Ascending aorta (tissue), 2 donors: ENCODE measurements at regions of chr11 and their contacts with region 1.

Region 1: DNA sequence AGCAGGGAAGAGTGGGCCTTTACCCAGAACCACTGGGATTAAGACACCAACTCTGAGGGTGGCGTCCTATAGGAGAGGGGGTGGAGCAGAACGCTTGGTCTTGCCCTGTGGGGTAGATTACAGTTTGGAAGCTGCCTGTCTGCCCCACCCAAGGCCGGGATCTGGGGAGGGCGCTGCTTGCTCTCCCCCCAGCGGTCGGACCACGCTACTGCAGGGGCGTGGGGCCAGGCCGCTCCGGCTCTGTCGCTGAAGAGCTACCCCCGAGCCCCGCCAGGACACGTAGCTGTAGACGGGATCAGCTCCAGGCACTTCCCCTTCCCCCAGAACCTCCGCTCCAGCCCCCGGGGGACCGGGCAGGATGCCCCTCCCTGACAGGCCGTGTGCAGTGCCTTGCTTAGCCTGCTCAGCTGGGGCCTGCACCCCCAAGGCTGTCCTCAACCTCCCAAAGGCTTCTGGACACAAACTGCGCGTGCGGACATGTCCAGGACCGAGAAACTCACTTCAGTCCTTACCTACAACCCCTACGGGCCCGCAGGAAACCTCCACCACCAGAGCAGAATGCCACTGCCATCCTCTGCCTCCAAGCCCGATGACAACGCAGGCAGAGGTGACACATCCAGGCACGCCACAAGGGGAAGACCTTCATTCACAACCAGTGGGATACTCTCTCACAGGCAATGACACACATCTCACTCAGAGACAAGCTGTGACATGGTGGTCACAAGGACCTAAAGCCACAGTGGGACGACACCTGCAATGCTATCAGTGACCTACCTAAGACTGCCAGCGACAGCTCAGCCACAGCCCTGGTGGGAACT is 3.6 kb downstream of the AHNAK start:
- DNase-seq: peak; percentile 47 to 88
- H3K4me3 ChIP-seq: peak overlapping the region; percentile 98
- H3K27ac ChIP-seq: peak overlapping the region; percentile 96 to 99
- H3K4me1 ChIP-seq: peaks cover 36 to 52% of the 10 kb centered on the region in 2 donors
- H3K27me3 ChIP-seq: no peaks in the 10 kb centered on the region
- CTCF ChIP-seq: peak; percentile 98 to 99 (median 99)

Region 2: GRCh38 chr11:62400760-62401159 is 142.2 kb before region 1 on chr11:
- intact Hi-C with region 1: loop called (anchors 1 kb)
- DNase-seq: peak; percentile 49 to 92
- H3K4me3 ChIP-seq: peak overlapping the region in 1 of 2 donors; percentile 31
- H3K27ac ChIP-seq: peak overlapping the region; percentile 87
- H3K4me1 ChIP-seq: peaks cover 45 to 54% of the 10 kb centered on the region in 2 donors
- H3K27me3 ChIP-seq: no peaks in the 10 kb centered on the region
- CTCF ChIP-seq: no peak

Region 3: DNA sequence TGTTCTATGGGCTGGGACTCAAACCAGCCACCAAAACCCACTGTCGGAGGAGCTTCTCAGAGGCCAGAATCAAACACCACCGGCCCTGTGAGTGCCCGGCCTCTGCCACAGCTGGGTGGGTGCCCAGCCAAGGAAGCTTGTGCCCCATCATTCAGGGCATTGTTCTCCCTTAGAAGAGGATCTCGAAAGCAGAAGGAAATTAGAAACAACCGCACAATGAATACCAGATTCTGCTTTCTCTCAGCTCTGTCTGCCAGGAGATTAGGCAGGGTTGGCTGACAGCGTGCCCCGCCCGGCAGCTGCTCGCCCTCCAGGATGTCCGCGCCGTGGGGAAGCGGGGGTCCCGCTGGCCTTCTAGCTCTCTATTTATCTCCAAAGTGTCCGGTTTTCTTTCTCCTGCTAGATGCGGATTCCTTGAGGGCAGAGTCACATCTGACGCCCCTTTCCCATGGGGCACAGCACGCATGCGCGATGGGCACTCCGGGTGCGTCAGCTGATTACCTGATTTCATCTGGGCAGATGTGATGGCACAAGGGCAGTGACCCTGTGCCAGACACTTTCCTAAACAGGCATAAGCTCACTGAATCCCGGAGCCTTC is 98.6 kb before region 1 on chr11:
- intact Hi-C with region 1: loop called (anchors 2 kb)
- DNase-seq: peak; percentile 44 to 94
- H3K4me3 ChIP-seq: peak overlapping the region; percentile 48 to 60
- H3K27ac ChIP-seq: peak overlapping the region; percentile 88 to 98
- H3K4me1 ChIP-seq: peaks cover 8 to 39% of the 10 kb centered on the region in 2 donors
- H3K27me3 ChIP-seq: no peaks in the 10 kb centered on the region
- CTCF ChIP-seq: no peak

Region 4: DNA sequence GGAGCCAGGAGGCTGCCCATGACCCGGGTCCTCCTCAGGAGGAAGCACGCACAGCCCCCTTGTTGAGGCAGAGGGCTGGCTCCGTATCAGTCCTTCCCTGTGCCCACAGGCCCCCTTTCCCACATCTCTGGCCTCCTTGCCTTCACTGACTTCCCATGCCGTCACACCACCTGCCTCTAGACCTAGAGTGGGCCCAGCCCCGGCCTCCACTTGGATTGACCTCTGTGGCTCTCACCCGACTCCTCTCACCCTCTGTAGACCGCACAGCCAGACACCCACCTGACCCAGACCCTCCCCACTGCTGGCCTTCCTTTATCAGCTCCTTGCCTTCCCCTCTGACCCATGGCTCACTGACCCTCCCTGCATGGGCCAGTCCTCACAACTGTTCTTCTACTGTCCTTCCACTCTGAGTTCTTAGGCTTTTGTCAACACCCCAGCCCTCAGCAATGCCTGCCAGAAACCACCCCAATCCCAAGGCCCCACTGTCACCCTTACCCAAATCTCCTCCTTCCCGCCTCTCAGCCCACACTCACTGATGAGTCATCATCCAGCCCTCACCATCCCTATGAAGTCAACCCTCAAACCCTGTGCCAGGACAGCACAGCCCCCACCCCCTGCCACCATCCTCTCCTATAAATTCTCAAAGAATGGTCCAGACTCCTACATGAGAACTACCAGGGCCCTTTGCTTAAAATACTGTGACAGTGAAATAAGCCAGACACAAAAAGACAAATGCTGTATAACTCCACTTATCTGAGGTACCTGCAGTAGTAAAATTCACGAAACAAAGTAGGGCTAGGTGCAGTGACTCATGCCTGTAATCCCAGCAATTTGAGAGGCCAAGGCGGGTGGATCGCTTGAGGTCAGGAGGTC is 70.7 kb before region 1 on chr11:
- intact Hi-C with region 1: no loop called
- DNase-seq: no peak
- H3K4me3 ChIP-seq: no peak overlapping the region
- H3K27ac ChIP-seq: no peak overlapping the region
- H3K4me1 ChIP-seq: no peaks in the 10 kb centered on the region
- H3K27me3 ChIP-seq: no peaks in the 10 kb centered on the region
- CTCF ChIP-seq: no peak

Region 5: DNA sequence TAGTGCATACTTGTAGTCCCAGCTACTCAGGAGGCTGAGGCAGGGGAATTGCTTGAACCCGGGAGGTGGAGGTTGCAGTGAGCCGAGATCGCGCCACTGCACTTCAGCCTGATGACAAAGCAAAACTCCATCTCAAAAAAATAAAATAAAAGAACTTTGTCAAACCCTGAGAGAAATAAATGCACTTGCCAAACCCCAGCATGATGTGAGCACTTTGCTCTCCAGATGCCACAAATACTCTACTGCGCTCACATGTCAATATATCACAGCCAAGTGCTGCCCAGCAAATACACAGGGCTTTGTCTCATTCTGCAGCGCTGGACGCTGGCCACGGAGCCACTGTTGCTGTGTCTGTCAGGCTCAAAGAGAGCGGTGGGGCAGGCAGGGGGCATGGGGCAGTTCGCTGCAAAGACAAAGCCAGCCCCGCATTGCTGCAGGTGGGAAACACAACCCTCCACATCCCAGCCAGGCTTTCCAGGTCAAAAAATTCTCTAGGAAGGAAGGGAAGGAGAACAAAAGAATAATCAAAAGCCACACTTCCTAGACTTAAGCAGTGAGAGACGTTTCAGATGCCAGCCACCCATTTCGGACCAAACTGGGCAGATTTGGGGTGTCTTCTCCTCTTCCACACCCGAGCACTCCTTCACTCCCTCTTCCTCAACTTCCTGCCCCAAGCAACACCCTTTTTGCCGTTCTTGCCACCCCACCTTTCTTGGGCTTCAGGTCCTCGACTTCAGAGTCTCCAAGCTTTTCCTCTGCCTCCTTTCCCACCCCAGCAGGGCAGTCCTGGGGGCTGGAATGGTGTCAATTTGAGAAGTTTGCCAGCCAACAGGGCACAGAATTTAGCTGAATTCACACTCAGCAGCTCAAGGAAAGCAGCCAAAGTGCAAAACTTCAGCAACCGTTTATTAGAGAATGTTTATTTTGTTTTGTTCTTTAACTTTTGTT is 41.3 kb before region 1 on chr11:
- intact Hi-C with region 1: no loop called
- DNase-seq: no peak
- H3K4me3 ChIP-seq: peak overlapping the region in 1 of 2 donors; percentile 17
- H3K27ac ChIP-seq: peak overlapping the region; percentile 47 to 57
- H3K4me1 ChIP-seq: peaks cover 0 to 25% of the 10 kb centered on the region in 2 donors
- H3K27me3 ChIP-seq: no peaks in the 10 kb centered on the region
- CTCF ChIP-seq: no peak

Region 6: DNA sequence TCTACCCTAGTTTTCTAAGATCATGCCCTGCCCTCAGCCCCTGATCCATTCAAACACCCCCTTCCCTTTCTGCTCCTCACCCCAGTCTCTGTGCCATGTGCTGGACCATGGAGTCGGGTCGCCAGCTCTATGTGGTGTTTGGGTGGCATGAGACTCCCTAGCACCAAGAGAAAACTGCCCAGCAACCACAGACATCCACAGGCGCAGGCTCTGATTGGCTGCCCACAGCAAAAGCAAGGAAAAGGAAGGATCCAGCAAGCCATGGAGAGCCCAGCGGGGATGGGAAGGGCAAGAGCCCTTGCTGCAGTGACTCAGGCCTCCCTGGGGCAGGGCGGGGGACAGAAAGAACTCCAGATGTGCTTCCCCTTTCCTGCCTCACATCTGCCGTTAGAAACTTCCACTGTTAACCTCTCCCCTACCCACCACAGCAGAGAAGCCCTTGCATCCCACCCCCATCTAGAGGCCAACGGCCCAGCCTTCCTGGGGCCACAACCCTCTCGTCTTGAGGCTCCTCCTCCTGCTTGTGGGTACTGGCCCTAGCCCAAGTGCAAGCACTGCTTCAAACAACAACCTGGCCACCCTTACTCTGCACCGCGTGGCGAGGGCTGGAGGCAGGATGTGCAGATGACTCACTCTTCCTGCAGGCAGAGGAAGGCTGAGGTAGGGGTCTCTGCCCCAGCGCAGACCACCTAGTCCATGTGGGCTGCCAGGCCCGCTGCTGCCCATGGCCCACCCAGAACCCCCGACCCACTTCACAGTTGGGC is 13.3 kb after region 1 on chr11:
- intact Hi-C with region 1: loop called (anchors 1 kb)
- DNase-seq: peak; percentile 85 to 97
- H3K4me3 ChIP-seq: peak overlapping the region; percentile 36 to 42
- H3K27ac ChIP-seq: peak overlapping the region; percentile 94 to 96
- H3K4me1 ChIP-seq: peaks cover 43 to 69% of the 10 kb centered on the region in 2 donors
- H3K27me3 ChIP-seq: no peaks in the 10 kb centered on the region
- CTCF ChIP-seq: no peak

Region 7: DNA sequence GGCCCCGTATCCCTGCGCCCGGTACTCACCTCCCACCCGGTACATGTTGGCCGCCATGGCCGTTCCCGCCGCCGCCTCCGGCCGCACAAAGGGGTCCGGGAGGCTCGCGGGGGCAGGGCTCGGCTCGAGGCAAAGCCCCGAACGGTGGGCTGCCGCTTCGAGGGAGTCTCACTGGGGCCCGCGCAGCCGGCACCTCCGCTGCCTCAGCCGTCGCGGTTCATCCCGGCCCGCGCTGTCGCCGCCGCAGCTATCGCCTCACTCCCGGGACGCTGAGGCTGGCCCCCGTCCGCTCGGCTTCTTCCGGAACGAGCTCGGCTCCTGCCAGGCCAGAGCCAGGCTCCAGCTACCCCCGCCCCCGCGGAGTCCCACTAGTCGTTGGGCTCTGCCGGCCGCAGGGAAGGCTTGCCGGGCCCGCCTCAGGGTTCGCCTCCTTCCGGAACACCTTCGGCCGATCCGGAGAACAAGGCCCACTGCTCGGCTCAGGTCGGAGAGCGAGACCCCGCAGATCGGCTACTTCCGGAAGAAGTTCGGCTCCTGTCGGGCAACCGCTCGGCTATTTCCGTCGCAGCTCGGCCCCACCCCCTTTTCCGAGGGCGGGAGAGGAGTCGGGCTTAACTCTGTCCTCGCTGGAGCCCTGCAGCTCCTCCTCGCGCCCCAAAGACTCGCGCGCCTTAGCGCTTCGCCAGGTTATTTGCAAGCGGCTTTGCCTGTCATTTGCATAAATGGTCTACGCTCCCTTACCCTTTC is 58.6 kb after region 1 on chr11 and contains the start of gene MTA2:
- intact Hi-C with region 1: no loop called
- DNase-seq: peak; percentile 89 to 98
- H3K4me3 ChIP-seq: peak within 1 kb of the TSS; percentile 87 to 98
- H3K27ac ChIP-seq: peak within 1 kb of the TSS; percentile 96 to 97
- H3K4me1 ChIP-seq: peaks cover 8 to 20% of the 10 kb centered on the region in 2 donors
- H3K27me3 ChIP-seq: no peaks in the 10 kb centered on the region
- CTCF ChIP-seq: no peak
- total RNA-seq, gene MTA2: 79.2 TPM

Region 8: GRCh38 chr11:62880231-62880802 is 337.4 kb after region 1 on chr11:
- intact Hi-C with region 1: no loop called
- DNase-seq: peak in 1 of 2 donors; percentile 86
- H3K4me3 ChIP-seq: peak overlapping the region; percentile 56 to 95
- H3K27ac ChIP-seq: peak overlapping the region; percentile 91 to 98
- H3K4me1 ChIP-seq: peaks cover 17 to 42% of the 10 kb centered on the region in 2 donors
- H3K27me3 ChIP-seq: no peaks in the 10 kb centered on the region
- CTCF ChIP-seq: no peak